ENCODE measurements at regions of chr1 and their contacts with region 1.

Region 1: GRCh38 chr1:77156214-77156613 is 63.0 kb downstream of the PIGK start:
- DNase-seq: no peak
- ATAC-seq: no peak
- H3K4me3 ChIP-seq: no peak overlapping the region
- H3K27ac ChIP-seq: no peak overlapping the region
- H3K4me1 ChIP-seq: no peaks in the 10 kb centered on the region
- H3K27me3 ChIP-seq: no peaks in the 10 kb centered on the region
- CTCF ChIP-seq: no peak
- EP300 ChIP-seq: no peak
- POLR2A ChIP-seq: no peak
- RAD21 ChIP-seq: no peak

Region 2: GRCh38 chr1:77416692-77417450 is 260.7 kb after region 1 on chr1:
- CTCF ChIA-PET with region 1: no interaction called
- POLR2A ChIA-PET with region 1: no interaction called
- RAD21 ChIA-PET with region 1: no interaction called
- SMC1A ChIA-PET with region 1: no interaction called
- in situ Hi-C with region 1: no loop called
- intact Hi-C with region 1: loop called (anchors 10 kb)
- DNase-seq: no peak
- ATAC-seq: no peak
- H3K4me3 ChIP-seq: no peak overlapping the region
- H3K27ac ChIP-seq: no peak overlapping the region
- H3K4me1 ChIP-seq: peaks cover 27% of the 10 kb centered on the region
- H3K27me3 ChIP-seq: no peaks in the 10 kb centered on the region
- CTCF ChIP-seq: peak in 2 of 3 experiments; percentile 16 to 19; a peak in 1 of 6 replicates
- EP300 ChIP-seq: no peak
- POLR2A ChIP-seq: no peak
- RAD21 ChIP-seq: no peak

Region 3: DNA sequence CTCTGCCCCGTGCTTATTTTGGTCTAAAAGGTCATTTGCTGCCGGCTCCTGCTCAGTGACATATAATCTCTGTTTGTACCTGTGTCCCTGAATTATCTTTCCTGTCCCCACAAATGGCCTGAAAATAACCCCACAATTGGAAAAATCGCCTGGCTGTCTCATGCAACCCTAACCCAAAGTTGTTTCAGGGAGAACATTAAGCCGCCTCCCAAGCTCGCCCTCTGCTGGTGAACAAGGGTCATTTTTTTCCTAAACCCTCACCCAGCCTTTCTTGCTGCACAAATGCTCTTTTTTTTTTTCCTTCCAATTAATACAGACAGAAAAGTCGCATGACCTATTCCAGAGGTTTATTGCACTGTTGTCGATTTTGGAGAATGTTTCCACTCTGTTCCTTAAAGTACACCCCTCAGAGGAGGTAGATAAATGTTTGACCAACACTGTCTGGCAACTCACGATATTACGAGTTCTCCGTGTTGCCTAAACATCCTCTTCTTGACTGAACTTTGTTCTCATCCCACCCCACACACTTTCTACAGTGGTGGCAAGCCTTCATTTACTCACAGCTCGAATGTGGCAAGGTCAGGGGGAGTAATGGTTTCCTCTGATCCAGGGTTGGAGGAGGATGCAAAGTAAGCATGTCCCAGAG is 377.6 kb after region 1 on chr1:
- CTCF ChIA-PET with region 1: no interaction called
- POLR2A ChIA-PET with region 1: no interaction called
- RAD21 ChIA-PET with region 1: no interaction called
- SMC1A ChIA-PET with region 1: no interaction called
- in situ Hi-C with region 1: loop called (anchors 5 kb)
- intact Hi-C with region 1: no loop called
- DNase-seq: no peak
- ATAC-seq: peak; percentile 82
- H3K4me3 ChIP-seq: no peak overlapping the region
- H3K27ac ChIP-seq: no peak overlapping the region
- H3K4me1 ChIP-seq: peaks cover 3% of the 10 kb centered on the region; the same call in 1 of the 2 replicates
- H3K27me3 ChIP-seq: no peaks in the 10 kb centered on the region
- CTCF ChIP-seq: peak; percentile 78 to 84 (median 80)
- EP300 ChIP-seq: no peak
- POLR2A ChIP-seq: no peak
- RAD21 ChIP-seq: peak; percentile 69